Transverse colon (tissue), 4 donors: ENCODE measurements at regions of chr2 and their contacts with region 1.

Region 1: DNA sequence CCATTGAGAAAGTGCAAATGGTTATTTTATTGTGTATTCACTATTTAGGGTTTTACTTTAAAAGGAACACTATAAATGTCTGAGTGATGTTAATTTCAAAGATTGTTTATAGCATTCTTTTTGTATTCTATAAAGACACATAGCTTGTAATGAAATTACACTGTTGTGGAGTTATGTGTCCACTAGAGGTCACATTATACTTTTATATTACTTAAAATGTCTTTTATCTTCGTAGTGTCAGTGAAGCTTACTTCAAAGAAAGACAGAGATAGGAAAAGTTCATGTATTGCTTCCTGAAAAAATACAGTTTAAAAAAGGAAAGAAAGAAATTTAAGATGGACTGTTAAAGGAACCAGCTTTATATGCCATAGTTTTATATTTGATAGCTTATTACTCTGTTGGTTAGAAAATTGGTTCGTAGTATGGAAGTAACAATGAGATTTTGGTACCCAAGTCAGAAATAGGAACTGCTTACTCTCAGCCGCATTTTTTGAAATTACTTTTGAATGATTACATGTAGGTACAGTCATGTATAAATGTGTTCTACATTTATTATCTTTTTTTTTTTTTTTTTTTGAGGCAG is 20.5 kb downstream of the APLF start:
- DNase-seq: no peak
- H3K4me3 ChIP-seq: no peak overlapping the region
- H3K27ac ChIP-seq: no peak overlapping the region
- H3K4me1 ChIP-seq: no peaks in the 10 kb centered on the region
- H3K27me3 ChIP-seq: no peaks in the 10 kb centered on the region
- CTCF ChIP-seq: peak; percentile 33 to 58 (median 47)
- EP300 ChIP-seq: no peak
- POLR2A ChIP-seq: no peak

Region 2: DNA sequence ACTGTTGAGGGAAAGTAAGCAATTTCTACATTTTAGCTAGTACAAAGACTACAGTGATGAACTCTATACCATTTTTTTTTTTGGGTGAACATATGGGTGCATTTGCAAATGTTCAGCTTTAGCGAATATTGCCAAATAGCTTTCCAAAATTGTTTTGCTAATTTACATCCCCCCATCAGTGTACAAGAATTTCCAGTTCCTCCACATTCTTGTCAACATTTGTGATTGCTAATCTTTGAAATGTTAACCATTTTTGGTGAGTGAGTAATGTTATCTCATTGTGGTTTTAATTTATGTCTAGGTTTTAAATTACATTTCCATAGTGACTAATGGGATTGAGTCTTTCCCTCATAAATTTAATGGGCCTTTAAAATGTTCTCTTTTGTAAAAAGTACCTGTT is 151.7 kb before region 1 on chr2:
- in situ Hi-C with region 1: no loop called
- intact Hi-C with region 1: no loop called
- DNase-seq: no peak
- H3K4me3 ChIP-seq: no peak overlapping the region
- H3K27ac ChIP-seq: no peak overlapping the region
- H3K4me1 ChIP-seq: no peaks in the 10 kb centered on the region
- H3K27me3 ChIP-seq: peaks cover 3% of the 10 kb centered on the region
- CTCF ChIP-seq: no peak
- EP300 ChIP-seq: no peak
- POLR2A ChIP-seq: no peak

Region 3: GRCh38 chr2:68467077-68467960 is 20.5 kb before region 1 on chr2 and contains the starts of genes APLF and FBXO48:
- in situ Hi-C with region 1: no loop called
- intact Hi-C with region 1: no loop called
- DNase-seq: peak; percentile 99
- H3K4me3 ChIP-seq: peak within 1 kb of the TSS; percentile 67 to 91 (median 70)
- H3K27ac ChIP-seq: peak within 1 kb of the TSS; percentile 86 to 90 (median 89)
- H3K4me1 ChIP-seq: peaks cover 13 to 35% (median 20%) of the 10 kb centered on the region in 4 donors
- H3K27me3 ChIP-seq: no peaks in the 10 kb centered on the region
- CTCF ChIP-seq: no peak
- EP300 ChIP-seq: no peak
- POLR2A ChIP-seq: peak; percentile 72
- total RNA-seq, gene APLF: 2.9 to 28.5 (median 8.1) TPM
- total RNA-seq, gene FBXO48: 0.60 to 2.6 (median 2.2) TPM

Region 4: DNA sequence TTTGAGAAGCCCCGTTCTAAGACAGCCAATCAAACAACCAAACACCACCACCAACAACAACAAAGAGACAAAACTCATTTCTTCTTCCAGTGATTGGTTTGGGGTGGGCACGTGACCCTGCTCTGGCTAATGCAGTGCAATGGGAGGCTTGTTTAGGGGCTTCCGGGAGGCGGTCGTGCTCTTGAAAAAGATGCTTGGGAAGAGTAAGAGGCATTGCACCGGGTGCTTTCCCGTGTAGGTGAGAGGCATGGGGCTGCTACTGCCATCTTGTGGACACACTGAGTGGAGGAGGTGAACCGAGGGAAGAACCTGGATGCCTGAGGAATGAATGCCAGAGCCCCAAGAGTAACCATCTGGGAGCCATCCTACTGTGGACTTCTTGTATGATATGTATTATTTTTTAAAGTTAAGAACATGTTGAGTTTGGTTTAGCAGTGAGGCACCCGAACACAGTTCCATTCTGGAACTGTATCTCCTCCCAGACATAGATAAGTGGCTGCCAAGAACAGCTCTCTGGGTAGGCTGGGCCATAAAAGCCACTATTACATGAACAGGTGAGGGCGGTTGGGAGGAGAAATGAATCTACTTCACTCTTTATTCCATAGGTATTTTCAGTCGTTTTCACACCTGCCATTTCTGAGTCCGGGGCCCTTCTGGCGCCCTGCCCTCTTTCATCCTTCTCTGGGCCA is 227.6 kb after region 1 on chr2:
- in situ Hi-C with region 1: no loop called
- intact Hi-C with region 1: no loop called
- DNase-seq: peak; percentile 69
- H3K4me3 ChIP-seq: no peak overlapping the region
- H3K27ac ChIP-seq: peak overlapping the region in 2 of 4 donors; percentile 35 to 38
- H3K4me1 ChIP-seq: peaks cover 3 to 9% (median 5%) of the 10 kb centered on the region in 4 donors
- H3K27me3 ChIP-seq: no peaks in the 10 kb centered on the region
- CTCF ChIP-seq: peak; percentile 54 to 69 (median 60)
- EP300 ChIP-seq: no peak
- POLR2A ChIP-seq: no peak

Region 5: GRCh38 chr2:68726608-68727367 is 238.9 kb after region 1 on chr2:
- in situ Hi-C with region 1: loop called in 2 of 4 experiments (anchors 25 kb)
- intact Hi-C with region 1: no loop called
- DNase-seq: peak; percentile 70
- H3K4me3 ChIP-seq: no peak overlapping the region
- H3K27ac ChIP-seq: peak overlapping the region in 3 of 4 donors; percentile 28 to 63 (median 31)
- H3K4me1 ChIP-seq: peaks cover 0 to 9% (median 3%) of the 10 kb centered on the region in 4 donors
- H3K27me3 ChIP-seq: no peaks in the 10 kb centered on the region
- CTCF ChIP-seq: no peak
- EP300 ChIP-seq: no peak
- POLR2A ChIP-seq: no peak

Region 6: GRCh38 chr2:68925295-68925896 is 437.5 kb after region 1 on chr2:
- in situ Hi-C with region 1: loop called (anchors 10 to 25 kb)
- intact Hi-C with region 1: no loop called
- DNase-seq: no peak
- H3K4me3 ChIP-seq: no peak overlapping the region
- H3K27ac ChIP-seq: no peak overlapping the region
- H3K4me1 ChIP-seq: no peaks in the 10 kb centered on the region
- H3K27me3 ChIP-seq: no peaks in the 10 kb centered on the region
- CTCF ChIP-seq: peak; percentile 80 to 92 (median 91)
- EP300 ChIP-seq: no peak
- POLR2A ChIP-seq: no peak

Region 7: GRCh38 chr2:68980956-68981355 is 493.1 kb after region 1 on chr2:
- in situ Hi-C with region 1: no loop called
- intact Hi-C with region 1: no loop called
- DNase-seq: no peak
- H3K4me3 ChIP-seq: no peak overlapping the region
- H3K27ac ChIP-seq: no peak overlapping the region
- H3K4me1 ChIP-seq: no peaks in the 10 kb centered on the region
- H3K27me3 ChIP-seq: peaks cover 6% of the 10 kb centered on the region
- CTCF ChIP-seq: no peak
- EP300 ChIP-seq: no peak
- POLR2A ChIP-seq: no peak